Left ventricle myocardium inferior (tissue), 1 donor: ENCODE measurements at regions of chr3 and their contacts with region 1.

Region 1: DNA sequence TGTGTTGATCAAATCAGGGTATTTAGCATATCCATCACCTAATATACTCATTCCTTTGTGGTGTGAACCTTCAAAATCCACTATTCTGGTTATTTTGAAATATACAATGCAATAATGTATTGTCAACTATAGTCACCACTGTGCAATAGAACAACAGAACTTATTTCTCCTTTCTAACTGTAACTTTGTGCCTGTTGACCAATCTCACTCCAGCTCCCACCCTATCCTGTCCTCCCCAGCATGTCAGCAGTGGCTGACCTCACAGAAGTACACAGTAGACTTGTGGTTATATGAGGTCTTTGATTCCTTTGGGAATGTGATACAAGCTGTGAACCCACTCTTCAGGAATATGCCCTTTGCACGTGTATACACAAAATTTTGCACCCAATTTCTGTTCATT is 64.2 kb downstream of the ECT2 start:
- DNase-seq: no peak
- H3K4me3 ChIP-seq: no peak overlapping the region
- H3K27ac ChIP-seq: peak overlapping the region; percentile 70
- H3K4me1 ChIP-seq: peaks cover 20% of the 10 kb centered on the region
- H3K27me3 ChIP-seq: no peaks in the 10 kb centered on the region
- CTCF ChIP-seq: no peak

Region 2: GRCh38 chr3:172270557-172271166 is 544.1 kb before region 1 on chr3:
- intact Hi-C with region 1: no loop called
- DNase-seq: no peak
- H3K4me3 ChIP-seq: no peak overlapping the region
- H3K27ac ChIP-seq: no peak overlapping the region
- H3K4me1 ChIP-seq: peaks cover 56% of the 10 kb centered on the region
- H3K27me3 ChIP-seq: no peaks in the 10 kb centered on the region
- CTCF ChIP-seq: no peak

Region 3: DNA sequence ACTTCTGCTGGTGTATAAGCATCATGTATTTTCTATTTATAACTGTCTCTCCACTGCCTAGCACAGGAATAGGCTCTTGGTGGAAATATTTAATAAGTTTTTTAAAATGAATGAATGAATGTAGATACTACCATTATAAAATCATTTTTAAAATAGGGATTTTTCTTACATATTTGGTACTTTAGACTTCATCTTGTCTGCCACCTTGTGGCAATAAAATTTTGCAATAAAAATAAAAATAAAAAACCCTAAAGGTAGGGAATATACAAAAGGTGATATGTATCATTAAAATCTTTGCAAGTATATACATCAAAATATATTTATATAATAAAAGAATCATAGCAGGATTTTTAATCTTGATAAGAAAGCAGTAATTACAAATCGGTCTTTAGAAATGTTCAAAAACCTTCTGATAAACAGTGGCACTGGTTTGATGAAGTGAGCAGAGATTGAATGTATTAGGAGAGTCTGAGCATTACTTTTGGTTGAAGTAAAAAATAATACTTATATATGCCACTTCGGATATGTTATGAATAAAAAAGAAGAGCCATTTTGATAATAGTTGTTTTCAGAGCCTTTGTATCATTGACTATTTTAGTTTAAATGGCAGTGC is 231.1 kb after region 1 on chr3:
- intact Hi-C with region 1: loop called (anchors 10 kb)
- DNase-seq: no peak
- H3K4me3 ChIP-seq: no peak overlapping the region
- H3K27ac ChIP-seq: no peak overlapping the region
- H3K4me1 ChIP-seq: peaks cover 12% of the 10 kb centered on the region
- H3K27me3 ChIP-seq: no peaks in the 10 kb centered on the region
- CTCF ChIP-seq: peak; percentile 46